AG04450 (cell line): ENCODE measurements at regions of chr7 and their contacts with region 1.

Region 1: DNA sequence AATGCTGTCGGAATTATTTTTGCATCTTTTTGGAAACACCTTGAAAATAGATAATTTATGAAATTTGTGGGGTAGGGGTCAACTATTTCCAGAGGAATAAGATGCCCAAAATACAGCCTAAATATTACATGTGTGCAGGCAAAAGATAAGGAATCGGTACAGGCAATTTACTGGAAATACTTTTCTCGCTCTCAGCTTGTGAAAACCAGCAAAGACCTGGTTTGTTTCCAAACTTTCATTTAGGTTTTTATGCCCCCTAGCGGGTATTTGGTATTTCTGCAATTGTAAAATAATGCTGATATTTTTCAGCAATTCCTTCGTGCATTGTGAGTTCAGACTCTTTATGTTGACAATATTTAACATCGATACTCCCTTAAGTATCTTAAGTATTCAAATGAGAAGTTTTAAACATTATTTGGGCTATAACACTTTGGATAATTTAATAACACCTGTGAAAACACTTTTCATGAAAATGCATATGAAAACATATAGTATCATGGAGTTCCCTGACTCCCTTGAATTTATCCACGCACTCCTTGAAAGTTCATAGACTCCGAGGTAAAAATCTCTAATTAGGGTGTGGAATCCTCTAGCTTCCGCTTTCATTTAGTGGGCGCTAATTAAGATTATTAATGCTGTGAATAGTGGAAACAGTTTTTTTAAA is 132.4 kb downstream of the TSPAN12 start:
- DNase-seq: no peak
- H3K4me3 ChIP-seq: no peak overlapping the region
- H3K27ac ChIP-seq: no peak overlapping the region
- H3K27me3 ChIP-seq: no peaks in the 10 kb centered on the region
- CTCF ChIP-seq: peak; percentile 75

Region 2: DNA sequence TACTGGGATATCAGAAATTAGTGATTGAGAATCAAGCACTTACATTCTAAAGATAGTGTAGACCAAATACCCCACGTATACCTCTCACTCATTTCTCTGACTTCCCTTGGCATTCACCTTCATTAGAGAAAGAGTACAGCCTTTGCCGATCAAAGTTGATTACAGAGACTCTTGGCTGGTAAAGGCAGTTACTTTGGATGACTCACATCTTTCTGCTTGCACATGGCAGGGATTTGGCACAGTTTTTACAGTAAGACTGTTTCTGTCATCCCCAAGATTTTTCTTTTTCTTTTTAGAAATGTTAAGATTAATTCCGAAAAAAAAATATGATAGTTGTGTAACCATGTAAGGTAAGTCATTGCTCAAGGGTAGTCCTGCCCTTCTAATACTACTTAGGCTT is 10.6 kb before region 1 on chr7:
- CTCF ChIA-PET with region 1: interaction called, 25 read pairs
- POLR2A ChIA-PET with region 1: no interaction called
- DNase-seq: no peak
- H3K4me3 ChIP-seq: no peak overlapping the region
- H3K27ac ChIP-seq: no peak overlapping the region
- H3K27me3 ChIP-seq: no peaks in the 10 kb centered on the region
- CTCF ChIP-seq: no peak